ENCODE measurements at regions of chr1 and their contacts with region 1.

Region 1: DNA sequence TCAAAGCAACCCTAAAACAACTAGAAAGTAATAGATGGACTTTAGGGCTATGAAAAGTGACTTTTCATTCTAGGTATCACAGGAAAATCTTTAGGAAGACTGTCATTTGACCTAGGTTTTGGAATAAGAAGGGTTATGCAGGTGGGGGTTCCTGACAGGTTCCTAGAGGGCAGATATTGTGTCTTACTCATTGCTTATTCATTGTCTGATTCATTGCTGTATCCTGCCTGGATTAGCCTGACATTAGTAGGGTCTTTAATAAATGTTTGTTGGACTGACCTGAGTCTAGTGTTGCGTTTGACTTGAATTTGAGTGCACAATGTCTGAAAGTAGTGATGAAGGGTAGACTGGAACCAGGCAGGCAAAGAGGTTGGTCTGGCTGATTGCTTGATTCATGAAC is 6.0 kb downstream of the FNBP1L start:
- DNase-seq: no peak
- ATAC-seq: no peak
- H3K4me3 ChIP-seq: no peak overlapping the region
- H3K27ac ChIP-seq: no peak overlapping the region
- H3K4me1 ChIP-seq: peaks cover 9 to 20% of the 10 kb centered on the region in 2 donors
- H3K27me3 ChIP-seq: no peaks in the 10 kb centered on the region
- CTCF ChIP-seq: no peak
- POLR2A ChIP-seq: no peak

Region 2: GRCh38 chr1:93502561-93502960 is 48.6 kb after region 1 on chr1:
- in situ Hi-C with region 1: no loop called
- intact Hi-C with region 1: loop called (anchors 10 kb)
- DNase-seq: no peak
- ATAC-seq: no peak
- H3K4me3 ChIP-seq: no peak overlapping the region
- H3K27ac ChIP-seq: no peak overlapping the region
- H3K4me1 ChIP-seq: peaks cover 0 to 3% of the 10 kb centered on the region in 2 donors
- H3K27me3 ChIP-seq: no peaks in the 10 kb centered on the region
- CTCF ChIP-seq: no peak
- POLR2A ChIP-seq: no peak